Ascending aorta (tissue), 2 donors: ENCODE measurements at regions of chr4 and their contacts with region 1.

Region 1: GRCh38 chr4:174282836-174283506 is 496 bp downstream of the FBXO8 start:
- DNase-seq: peak; percentile 57 to 92
- H3K4me3 ChIP-seq: peak overlapping the region; percentile 84 to 96
- H3K27ac ChIP-seq: peak overlapping the region; percentile 96 to 98
- H3K4me1 ChIP-seq: peaks cover 0 to 13% of the 10 kb centered on the region in 2 donors
- H3K27me3 ChIP-seq: no peaks in the 10 kb centered on the region
- CTCF ChIP-seq: no peak

Region 2: GRCh38 chr4:173168396-173169177 is 1114.4 kb before region 1 on chr4 and contains the start of gene GALNT7:
- intact Hi-C with region 1: loop called (anchors 10 kb)
- DNase-seq: peak in 1 of 2 donors; percentile 80
- H3K4me3 ChIP-seq: peak within 1 kb of the TSS; percentile 70 to 98
- H3K27ac ChIP-seq: peak within 1 kb of the TSS; percentile 86 to 94
- H3K4me1 ChIP-seq: peaks cover 0 to 17% of the 10 kb centered on the region in 2 donors
- H3K27me3 ChIP-seq: no peaks in the 10 kb centered on the region
- CTCF ChIP-seq: no peak
- total RNA-seq, gene GALNT7: 8.2 TPM

Region 3: DNA sequence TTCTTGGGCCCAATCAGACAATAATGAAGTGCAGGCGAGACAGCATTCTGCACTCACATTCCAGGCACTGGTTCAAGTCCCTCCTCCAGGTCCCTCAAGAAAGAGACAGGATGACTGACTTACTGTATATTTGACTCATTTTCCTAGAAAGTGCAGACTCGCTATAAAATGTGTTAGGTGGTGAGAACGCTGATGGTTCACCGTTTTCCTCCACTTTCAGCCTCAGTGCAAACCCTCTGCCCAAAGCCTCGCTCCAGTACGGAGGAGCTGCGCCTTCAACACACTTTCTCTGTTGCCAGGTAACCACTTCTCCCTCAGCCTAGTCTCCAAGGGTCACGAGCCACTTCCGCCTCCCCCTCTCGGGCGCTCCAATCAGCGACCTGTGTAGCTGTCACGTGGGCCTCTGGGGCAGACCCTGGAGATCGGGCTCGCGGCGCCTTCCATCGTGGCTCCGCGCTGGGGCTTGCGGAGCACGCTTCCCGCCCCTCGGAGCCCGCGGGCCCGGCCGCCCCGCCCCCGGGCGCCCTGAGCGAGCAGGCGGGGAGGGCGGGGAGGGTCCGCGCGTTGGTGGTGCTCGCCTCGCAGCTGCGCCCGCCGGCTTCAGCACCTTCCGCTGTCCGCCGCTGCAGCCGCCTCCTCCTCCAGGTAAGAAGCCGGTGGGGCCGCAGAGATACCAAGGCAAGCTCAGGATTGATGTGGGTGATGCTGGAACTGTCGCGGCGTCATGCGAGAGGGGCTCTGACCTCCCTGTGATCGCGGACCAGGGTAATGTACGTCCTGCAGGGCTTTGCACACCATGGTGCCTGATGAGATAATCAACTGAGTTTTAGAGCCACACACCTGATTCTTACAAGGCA is 1782.7 kb after region 1 on chr4 and contains the start of gene WDR17:
- intact Hi-C with region 1: loop called (anchors 10 kb)
- DNase-seq: peak; percentile 69 to 94
- H3K4me3 ChIP-seq: peak within 1 kb of the TSS; percentile 63 to 70
- H3K27ac ChIP-seq: no peak within 1 kb of the TSS
- H3K4me1 ChIP-seq: no peaks in the 10 kb centered on the region
- H3K27me3 ChIP-seq: no peaks in the 10 kb centered on the region
- CTCF ChIP-seq: no peak
- total RNA-seq, gene WDR17: 3.4 TPM